Endothelial cell of umbilical vein (primary cell): ENCODE measurements at regions of chr19 and their contacts with region 1.

Region 1: GRCh38 chr19:35648017-35648961 is at the start of gene COX6B1:
- DNase-seq: peak; percentile 96
- H3K4me3 ChIP-seq: peak within 1 kb of the TSS; percentile 81 to 97 (median 89)
- H3K27ac ChIP-seq: peak within 1 kb of the TSS; percentile 65
- H3K4me1 ChIP-seq: peaks cover 12% of the 10 kb centered on the region
- H3K27me3 ChIP-seq: no peaks in the 10 kb centered on the region
- CTCF ChIP-seq: no peak
- POLR2A ChIP-seq: peak; percentile 88
- total RNA-seq, gene COX6B1: 300 and 327 TPM in 2 replicates

Region 2: DNA sequence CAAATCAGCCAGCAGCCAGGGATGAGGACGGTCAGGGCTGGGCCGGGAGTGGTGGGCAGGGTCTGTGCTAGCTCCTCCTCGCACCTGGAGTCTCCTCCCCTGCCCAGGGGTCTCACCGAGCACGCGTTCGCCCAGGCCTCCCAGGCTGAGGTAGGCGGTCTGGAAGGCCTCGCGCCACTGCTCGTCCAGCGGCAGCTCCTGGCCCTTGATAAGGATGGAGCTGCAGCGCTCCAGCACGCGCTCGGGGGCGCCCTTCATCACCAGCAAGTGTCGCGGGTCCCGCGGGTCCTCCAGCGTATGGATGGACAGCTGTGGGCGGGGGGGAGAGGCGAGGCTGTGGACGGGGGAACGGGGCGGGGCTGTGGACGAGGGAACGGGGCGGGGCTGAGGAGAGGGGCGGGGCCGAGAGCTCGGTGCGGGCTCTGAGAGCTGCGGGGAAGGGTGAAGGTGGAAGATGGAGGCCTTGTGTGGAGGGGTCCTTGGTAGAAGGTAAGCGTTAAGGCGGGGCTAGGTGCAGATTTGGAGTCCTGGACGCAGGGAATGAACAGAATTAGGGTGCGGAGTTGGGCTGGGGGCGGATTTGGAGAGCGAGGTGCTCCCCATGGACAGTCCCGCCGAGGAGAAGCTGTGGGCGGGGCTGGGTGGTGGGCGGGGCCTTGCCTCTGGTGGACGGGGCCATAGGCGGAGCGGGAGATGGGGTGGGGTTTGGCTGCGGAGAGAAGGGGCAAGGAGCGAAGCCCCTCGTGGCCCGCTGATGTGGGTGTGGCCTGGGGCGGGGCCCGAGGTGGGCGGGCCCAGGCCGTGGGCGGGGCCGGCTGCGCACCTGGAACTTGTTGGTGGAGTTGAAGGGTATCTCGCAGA is 90.5 kb before region 1 on chr19:
- CTCF ChIA-PET with region 1: interaction called, 3 read pairs
- POLR2A ChIA-PET with region 1: no interaction called
- dilution Hi-C with region 1: no loop called
- intact Hi-C with region 1: loop called (anchors 1 kb)
- DNase-seq: peak; percentile 71
- H3K4me3 ChIP-seq: peak overlapping the region; percentile 25 to 36 (median 29)
- H3K27ac ChIP-seq: no peak overlapping the region
- H3K4me1 ChIP-seq: no peaks in the 10 kb centered on the region
- H3K27me3 ChIP-seq: peaks cover 0 to 4% of the 10 kb centered on the region in 2 experiments
- CTCF ChIP-seq: no peak
- POLR2A ChIP-seq: no peak

Region 3: GRCh38 chr19:35601971-35602370 is 46.3 kb before region 1 on chr19:
- CTCF ChIA-PET with region 1: no interaction called
- POLR2A ChIA-PET with region 1: no interaction called
- dilution Hi-C with region 1: no loop called
- intact Hi-C with region 1: no loop called
- DNase-seq: no peak
- H3K4me3 ChIP-seq: no peak overlapping the region
- H3K27ac ChIP-seq: no peak overlapping the region
- H3K4me1 ChIP-seq: no peaks in the 10 kb centered on the region
- H3K27me3 ChIP-seq: no peaks in the 10 kb centered on the region
- CTCF ChIP-seq: no peak
- POLR2A ChIP-seq: no peak

Region 4: DNA sequence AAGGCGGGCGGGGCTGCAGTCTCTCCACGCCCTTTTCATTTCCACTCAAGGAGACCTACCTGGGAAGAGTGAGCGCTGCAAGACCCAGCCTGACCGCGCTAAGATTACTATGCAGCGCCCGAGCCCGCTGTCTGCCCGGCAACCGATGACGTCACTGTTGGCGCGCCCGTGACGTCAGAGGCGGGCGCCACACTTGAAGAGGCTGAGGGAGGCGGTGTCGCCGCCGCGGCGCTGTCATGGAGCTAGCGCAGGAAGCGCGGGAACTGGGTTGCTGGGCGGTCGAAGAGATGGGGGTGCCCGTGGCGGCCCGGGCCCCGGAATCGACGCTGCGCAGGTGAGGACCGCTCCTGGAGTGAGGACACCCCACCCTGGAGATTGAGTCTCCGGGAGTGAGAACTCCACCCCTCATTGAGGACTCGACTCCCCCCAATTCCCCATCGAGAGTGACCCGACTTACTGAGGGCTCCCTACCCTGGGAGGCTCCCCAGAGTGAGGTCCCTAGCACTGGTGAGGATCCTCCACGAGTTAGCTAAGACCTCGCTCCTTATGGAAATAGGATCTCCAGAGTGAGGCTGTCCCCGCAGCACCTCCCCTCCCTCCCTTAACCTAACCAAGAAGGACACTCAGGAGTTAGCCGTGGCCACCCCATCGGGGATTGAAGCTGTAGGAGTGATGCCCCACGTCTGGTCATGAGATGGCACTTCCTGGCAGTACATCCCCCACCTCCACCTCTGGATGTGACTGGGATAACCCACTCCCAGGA is 35.5 kb before region 1 on chr19 and contains the start of gene HAUS5:
- CTCF ChIA-PET with region 1: interaction called, 4 read pairs
- POLR2A ChIA-PET with region 1: no interaction called
- dilution Hi-C with region 1: no loop called
- intact Hi-C with region 1: loop called (anchors 1 kb)
- DNase-seq: peak; percentile 94
- H3K4me3 ChIP-seq: peak within 1 kb of the TSS; percentile 76 to 86 (median 84)
- H3K27ac ChIP-seq: peak within 1 kb of the TSS; percentile 70
- H3K4me1 ChIP-seq: peaks cover 3% of the 10 kb centered on the region
- H3K27me3 ChIP-seq: no peaks in the 10 kb centered on the region
- CTCF ChIP-seq: no peak
- POLR2A ChIP-seq: peak; percentile 65
- total RNA-seq, gene HAUS5: 17.5 and 19.0 TPM in 2 replicates

Region 5: DNA sequence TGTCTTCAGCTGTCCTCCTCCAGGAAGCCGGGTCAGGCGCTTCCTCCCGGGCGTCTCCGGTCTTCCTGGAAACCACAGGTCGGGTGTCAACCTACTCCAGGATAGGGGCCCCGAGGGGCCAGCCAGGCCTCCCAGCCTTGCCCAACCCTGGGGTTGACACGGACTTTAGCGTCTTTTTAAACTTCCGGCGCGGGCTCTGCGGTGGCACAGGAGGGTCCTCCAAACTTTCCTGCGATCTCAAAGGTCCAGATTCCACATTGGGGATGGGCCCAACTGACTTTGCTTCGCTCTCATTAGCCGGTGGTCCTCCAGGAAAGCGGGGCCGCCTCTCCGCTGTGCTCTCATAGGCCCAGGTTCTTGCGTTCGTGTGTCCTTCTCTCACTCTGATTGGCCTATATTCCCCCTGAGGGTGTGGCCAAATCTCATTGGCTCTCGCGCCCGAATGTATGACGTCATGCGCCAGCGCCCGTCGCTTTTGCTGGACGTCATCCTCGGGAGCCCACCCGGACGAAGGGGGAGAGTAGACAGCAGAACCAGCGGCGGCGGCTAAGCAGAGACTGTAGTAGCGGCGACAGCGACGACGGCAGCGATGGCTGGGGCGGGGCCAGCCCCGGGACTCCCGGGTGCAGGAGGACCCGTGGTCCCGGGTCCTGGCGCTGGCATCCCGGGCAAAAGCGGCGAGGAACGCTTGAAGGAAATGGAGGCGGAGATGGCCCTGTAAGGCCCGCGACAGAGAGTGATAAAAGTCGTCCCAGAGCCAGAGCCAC is 19.5 kb before region 1 on chr19 and contains the start of gene RBM42:
- CTCF ChIA-PET with region 1: no interaction called
- POLR2A ChIA-PET with region 1: no interaction called
- dilution Hi-C with region 1: no loop called
- intact Hi-C with region 1: loop called (anchors 1 kb)
- DNase-seq: peak; percentile 99
- H3K4me3 ChIP-seq: peak within 1 kb of the TSS; percentile 70 to 98 (median 76)
- H3K27ac ChIP-seq: peak within 1 kb of the TSS; percentile 53
- H3K4me1 ChIP-seq: peaks cover 10% of the 10 kb centered on the region
- H3K27me3 ChIP-seq: no peaks in the 10 kb centered on the region
- CTCF ChIP-seq: no peak
- POLR2A ChIP-seq: peak; percentile 33
- total RNA-seq, gene RBM42: 97.3 and 99.2 TPM in 2 replicates

Region 6: GRCh38 chr19:35671818-35672217 is 23.5 kb after region 1 on chr19:
- CTCF ChIA-PET with region 1: no interaction called
- POLR2A ChIA-PET with region 1: no interaction called
- dilution Hi-C with region 1: no loop called
- intact Hi-C with region 1: no loop called
- DNase-seq: no peak
- H3K4me3 ChIP-seq: no peak overlapping the region
- H3K27ac ChIP-seq: no peak overlapping the region
- H3K4me1 ChIP-seq: no peaks in the 10 kb centered on the region
- H3K27me3 ChIP-seq: peaks cover 2 to 6% of the 10 kb centered on the region in 2 experiments
- CTCF ChIP-seq: no peak
- POLR2A ChIP-seq: no peak

Region 7: DNA sequence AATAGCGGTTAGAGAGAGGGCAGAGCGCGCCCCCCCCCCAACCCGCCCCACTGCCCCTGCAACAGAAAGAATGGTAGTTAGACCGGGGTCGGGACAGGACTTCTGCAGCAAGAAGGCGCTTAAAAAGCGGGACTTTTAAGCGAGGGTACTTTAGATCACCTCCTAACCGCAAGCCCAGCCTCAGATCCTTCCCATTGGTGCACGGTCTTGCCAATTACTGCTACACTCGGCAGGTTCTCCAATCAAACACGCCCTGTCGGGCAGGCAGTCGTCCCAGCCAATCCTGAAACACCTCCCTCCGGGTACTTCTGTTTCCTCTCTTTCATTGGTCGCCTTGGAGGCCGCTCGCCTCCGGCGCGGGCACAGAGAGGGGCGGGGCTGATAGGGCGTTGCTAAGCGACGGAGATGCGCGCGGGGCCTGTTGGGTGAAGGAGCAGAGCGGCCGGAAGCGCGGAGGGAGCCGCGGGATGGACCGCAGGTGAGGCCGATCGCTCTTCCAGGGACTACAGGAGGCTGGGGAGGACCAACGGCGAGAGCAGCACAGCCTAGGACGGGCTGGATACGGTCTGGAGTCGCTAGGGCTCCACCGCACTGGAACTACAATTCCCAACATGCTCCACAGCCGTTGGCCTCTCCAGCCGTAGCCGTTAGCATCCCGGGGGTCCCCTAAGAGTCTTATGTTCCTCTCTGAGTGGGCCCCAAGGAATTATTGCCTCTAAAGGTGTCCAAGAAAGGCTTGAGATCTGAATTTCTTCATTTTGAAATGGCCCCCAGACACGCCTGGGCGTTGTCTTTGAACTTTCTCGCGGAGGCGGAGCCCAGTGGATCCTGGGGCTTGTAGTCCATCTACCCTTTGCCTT is 109.7 kb after region 1 on chr19 and contains the start of gene PROSER3:
- CTCF ChIA-PET with region 1: no interaction called
- POLR2A ChIA-PET with region 1: no interaction called
- dilution Hi-C with region 1: no loop called
- intact Hi-C with region 1: loop called (anchors 5 kb)
- DNase-seq: peak; percentile 99
- H3K4me3 ChIP-seq: peak within 1 kb of the TSS; percentile 59 to 89 (median 82)
- H3K27ac ChIP-seq: peak within 1 kb of the TSS; percentile 84
- H3K4me1 ChIP-seq: peaks cover 22% of the 10 kb centered on the region
- H3K27me3 ChIP-seq: no peaks in the 10 kb centered on the region
- CTCF ChIP-seq: no peak
- POLR2A ChIP-seq: peak; percentile 29
- total RNA-seq, gene PROSER3: 28.3 and 32.1 TPM in 2 replicates